ENCODE measurements at regions of chr3 and their contacts with region 1.

Region 1: DNA sequence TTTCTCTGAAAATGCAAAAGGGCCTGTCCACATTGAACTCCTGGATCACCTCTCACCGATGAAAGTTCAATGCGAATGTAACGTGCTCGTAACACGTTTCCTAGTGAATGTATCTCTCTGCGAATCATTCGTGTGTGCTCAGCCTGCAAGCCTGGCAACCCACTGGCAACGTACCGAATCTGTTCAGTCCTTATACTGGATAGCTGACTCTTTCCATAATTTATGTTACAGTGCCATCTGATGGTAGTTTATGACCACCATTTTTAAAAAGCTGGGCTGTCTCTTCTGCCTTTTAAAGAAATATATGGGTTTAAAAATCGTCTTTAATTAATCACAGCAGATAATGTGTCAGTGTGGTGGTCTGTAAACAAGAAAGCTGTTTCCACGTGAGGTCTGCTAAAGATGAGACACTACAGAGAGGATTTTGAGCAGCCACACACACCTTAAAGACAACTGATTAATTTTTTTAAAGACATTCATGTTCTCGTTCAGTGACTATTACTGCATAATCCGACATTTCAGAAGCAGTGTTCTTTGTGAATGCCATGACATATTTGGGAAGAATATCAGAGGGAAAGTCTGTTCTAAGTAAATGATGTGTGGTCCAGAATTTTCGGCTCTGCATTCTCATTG is 69.4 kb upstream of the FOXP1 start:
- DNase-seq: peak; percentile 17 to 47 (median 44)
- H3K4me3 ChIP-seq: no peak overlapping the region
- H3K4me3 Mint-ChIP-seq: peak overlapping the region in 1 of 2 donors; percentile 64
- H3K27ac ChIP-seq: no peak overlapping the region
- H3K27ac Mint-ChIP-seq: no peak overlapping the region
- H3K4me1 ChIP-seq: peaks cover 0 to under 1% of the 10 kb centered on the region in 2 donors
- H3K4me1 Mint-ChIP-seq: peaks cover 24% of the 10 kb centered on the region
- H3K27me3 ChIP-seq: no peaks in the 10 kb centered on the region
- H3K27me3 Mint-ChIP-seq: peaks cover 0 to 3% (median 2%) of the 10 kb centered on the region in 3 donors
- CTCF ChIP-seq: peak; percentile 72

Region 2: DNA sequence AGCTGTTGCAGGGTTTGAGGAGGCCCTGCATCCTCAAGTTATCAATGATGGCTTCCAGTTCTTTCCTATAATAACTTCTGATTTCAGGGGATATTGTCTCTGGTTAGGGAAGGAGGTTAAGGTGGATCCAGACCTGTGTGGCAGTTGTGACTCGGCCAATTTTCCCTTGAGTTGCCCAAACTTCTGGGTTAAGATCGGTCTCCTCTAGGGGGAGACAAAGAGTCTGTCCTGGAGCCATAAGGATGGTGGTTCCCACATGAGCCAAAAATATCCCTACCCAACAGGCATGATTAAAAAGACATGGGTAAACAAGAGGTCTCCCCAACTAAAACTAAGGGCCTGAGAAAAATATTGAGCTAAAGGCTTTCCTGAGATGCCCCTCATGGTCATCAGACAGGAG is 1113.0 kb before region 1 on chr3:
- intact Hi-C with region 1: loop called in 1 of 2 experiments (anchors 10 kb)
- DNase-seq: no peak
- H3K4me3 ChIP-seq: no peak overlapping the region
- H3K4me3 Mint-ChIP-seq: no peak overlapping the region
- H3K27ac ChIP-seq: no peak overlapping the region
- H3K27ac Mint-ChIP-seq: no peak overlapping the region
- H3K4me1 ChIP-seq: no peaks in the 10 kb centered on the region
- H3K4me1 Mint-ChIP-seq: no peaks in the 10 kb centered on the region
- H3K27me3 ChIP-seq: no peaks in the 10 kb centered on the region
- H3K27me3 Mint-ChIP-seq: peaks cover 0 to 2% (median 1%) of the 10 kb centered on the region in 3 donors
- CTCF ChIP-seq: no peak

Region 3: DNA sequence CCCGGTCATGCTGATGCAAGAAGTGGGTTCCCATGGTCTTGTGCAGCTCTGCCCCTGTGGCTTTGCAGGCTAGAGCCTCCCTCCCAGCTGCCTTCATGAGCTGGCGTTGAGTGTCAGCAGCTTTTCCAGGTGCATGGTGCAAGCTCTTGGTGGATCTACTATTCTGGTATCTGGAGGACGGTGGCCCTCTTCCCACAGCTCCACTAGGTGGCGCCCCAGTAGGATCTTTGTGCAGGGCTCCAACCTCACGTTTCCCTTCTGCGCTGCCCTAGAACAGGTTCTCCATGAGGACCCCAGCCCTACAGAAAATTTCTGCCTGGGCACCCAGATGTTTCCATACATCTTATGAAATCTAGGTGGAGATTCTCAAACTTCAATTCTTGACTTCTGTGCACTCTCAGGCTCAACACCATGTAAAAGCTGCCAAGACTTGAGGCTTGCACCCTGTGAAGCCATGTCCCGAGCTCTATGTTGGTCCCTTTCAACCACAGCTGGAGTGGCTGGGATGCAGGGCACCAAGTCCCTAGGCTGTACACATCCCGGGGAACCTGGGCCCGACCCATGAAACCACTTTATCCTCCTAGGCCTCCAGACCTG is 1102.1 kb before region 1 on chr3:
- intact Hi-C with region 1: loop called (anchors 5 to 10 kb)
- DNase-seq: peak; percentile 15 to 48 (median 37)
- H3K4me3 ChIP-seq: no peak overlapping the region
- H3K4me3 Mint-ChIP-seq: no peak overlapping the region
- H3K27ac ChIP-seq: no peak overlapping the region
- H3K27ac Mint-ChIP-seq: no peak overlapping the region
- H3K4me1 ChIP-seq: no peaks in the 10 kb centered on the region
- H3K4me1 Mint-ChIP-seq: no peaks in the 10 kb centered on the region
- H3K27me3 ChIP-seq: no peaks in the 10 kb centered on the region
- H3K27me3 Mint-ChIP-seq: no peaks in the 10 kb centered on the region
- CTCF ChIP-seq: peak; percentile 84

Region 4: GRCh38 chr3:71607364-71607763 is 45.5 kb before region 1 on chr3:
- intact Hi-C with region 1: no loop called
- DNase-seq: no peak
- H3K4me3 ChIP-seq: no peak overlapping the region
- H3K4me3 Mint-ChIP-seq: no peak overlapping the region
- H3K27ac ChIP-seq: no peak overlapping the region
- H3K27ac Mint-ChIP-seq: no peak overlapping the region
- H3K4me1 ChIP-seq: no peaks in the 10 kb centered on the region
- H3K4me1 Mint-ChIP-seq: no peaks in the 10 kb centered on the region
- H3K27me3 ChIP-seq: no peaks in the 10 kb centered on the region
- H3K27me3 Mint-ChIP-seq: peaks cover 0 to 2% (median 2%) of the 10 kb centered on the region in 3 donors
- CTCF ChIP-seq: no peak

Region 5: GRCh38 chr3:71621825-71622537 is 30.9 kb before region 1 on chr3:
- intact Hi-C with region 1: no loop called
- DNase-seq: no peak
- H3K4me3 ChIP-seq: no peak overlapping the region
- H3K4me3 Mint-ChIP-seq: no peak overlapping the region
- H3K27ac ChIP-seq: no peak overlapping the region
- H3K27ac Mint-ChIP-seq: peak overlapping the region in 2 of 7 donors; percentile 45 to 54
- H3K4me1 ChIP-seq: peaks cover 0 to 2% of the 10 kb centered on the region in 2 donors
- H3K4me1 Mint-ChIP-seq: peaks cover 8% of the 10 kb centered on the region
- H3K27me3 ChIP-seq: no peaks in the 10 kb centered on the region
- H3K27me3 Mint-ChIP-seq: peaks cover 0 to 1% (median under 1%) of the 10 kb centered on the region in 3 donors
- CTCF ChIP-seq: no peak

Measured in CD14-positive monocyte (primary cell).